Aorta (tissue), 5 donors: ENCODE measurements at regions of chr5 and their contacts with region 1.

Region 1: GRCh38 chr5:153573326-153574033 is 83.0 kb downstream of the GRIA1 start:
- DNase-seq: no peak
- ATAC-seq: no peak
- H3K4me3 ChIP-seq: no peak overlapping the region
- H3K27ac ChIP-seq: peak overlapping the region; percentile 39 to 61
- H3K4me1 ChIP-seq: peaks cover 19 to 23% of the 10 kb centered on the region in 2 donors
- H3K27me3 ChIP-seq: no peaks in the 10 kb centered on the region

Region 2: DNA sequence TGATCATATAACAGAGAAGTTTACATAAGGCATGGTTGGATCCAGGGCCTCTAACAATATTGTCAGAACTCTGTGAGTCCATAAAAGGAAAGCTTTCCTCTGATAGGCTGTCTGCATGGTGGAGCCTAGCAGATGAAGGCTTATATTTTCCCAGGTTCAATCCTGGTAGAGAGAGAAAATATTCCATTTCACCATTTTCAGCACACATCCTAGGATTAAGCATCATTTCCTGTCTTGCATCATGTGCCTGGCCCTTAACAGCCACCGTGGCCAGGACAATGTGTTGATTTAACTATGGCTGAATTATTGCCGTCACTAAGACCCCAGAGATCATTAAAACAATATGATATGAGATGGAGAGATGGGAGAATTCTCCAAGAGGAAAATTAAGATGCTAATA is 173.9 kb before region 1 on chr5:
- intact Hi-C with region 1: loop called (anchors 10 kb)
- DNase-seq: no peak
- ATAC-seq: peak; percentile 33
- H3K4me3 ChIP-seq: no peak overlapping the region
- H3K27ac ChIP-seq: peak overlapping the region; percentile 57 to 59
- H3K4me1 ChIP-seq: peaks cover 0 to 10% of the 10 kb centered on the region in 2 donors
- H3K27me3 ChIP-seq: no peaks in the 10 kb centered on the region

Region 3: GRCh38 chr5:153629027-153629895 is 55.8 kb after region 1 on chr5:
- intact Hi-C with region 1: loop called in 1 of 2 experiments (anchors 2 kb)
- DNase-seq: peak; percentile 82 to 85
- ATAC-seq: peak; percentile 82
- H3K4me3 ChIP-seq: no peak overlapping the region
- H3K27ac ChIP-seq: peak overlapping the region in 1 of 2 donors; percentile 78
- H3K4me1 ChIP-seq: peaks cover 0 to 9% of the 10 kb centered on the region in 2 donors
- H3K27me3 ChIP-seq: no peaks in the 10 kb centered on the region

Region 4: GRCh38 chr5:153900703-153901395 is 327.4 kb after region 1 on chr5:
- intact Hi-C with region 1: loop called (anchors 5 to 10 kb)
- DNase-seq: peak in 1 of 2 donors; percentile 41
- ATAC-seq: peak; percentile 64
- H3K4me3 ChIP-seq: no peak overlapping the region
- H3K27ac ChIP-seq: peak overlapping the region in 1 of 2 donors; percentile 29
- H3K4me1 ChIP-seq: peaks cover 5 to 15% of the 10 kb centered on the region in 2 donors
- H3K27me3 ChIP-seq: no peaks in the 10 kb centered on the region